ENCODE measurements at regions of chr11 and their contacts with region 1.

Region 1: GRCh38 chr11:40306938-40307548 is 1152.4 kb downstream of the LRRC4C start:
- DNase-seq: no peak
- H3K4me3 Mint-ChIP-seq: no peak overlapping the region
- H3K27ac Mint-ChIP-seq: no peak overlapping the region
- H3K4me1 Mint-ChIP-seq: no peaks in the 10 kb centered on the region
- H3K27me3 Mint-ChIP-seq: no peaks in the 10 kb centered on the region

Region 2: DNA sequence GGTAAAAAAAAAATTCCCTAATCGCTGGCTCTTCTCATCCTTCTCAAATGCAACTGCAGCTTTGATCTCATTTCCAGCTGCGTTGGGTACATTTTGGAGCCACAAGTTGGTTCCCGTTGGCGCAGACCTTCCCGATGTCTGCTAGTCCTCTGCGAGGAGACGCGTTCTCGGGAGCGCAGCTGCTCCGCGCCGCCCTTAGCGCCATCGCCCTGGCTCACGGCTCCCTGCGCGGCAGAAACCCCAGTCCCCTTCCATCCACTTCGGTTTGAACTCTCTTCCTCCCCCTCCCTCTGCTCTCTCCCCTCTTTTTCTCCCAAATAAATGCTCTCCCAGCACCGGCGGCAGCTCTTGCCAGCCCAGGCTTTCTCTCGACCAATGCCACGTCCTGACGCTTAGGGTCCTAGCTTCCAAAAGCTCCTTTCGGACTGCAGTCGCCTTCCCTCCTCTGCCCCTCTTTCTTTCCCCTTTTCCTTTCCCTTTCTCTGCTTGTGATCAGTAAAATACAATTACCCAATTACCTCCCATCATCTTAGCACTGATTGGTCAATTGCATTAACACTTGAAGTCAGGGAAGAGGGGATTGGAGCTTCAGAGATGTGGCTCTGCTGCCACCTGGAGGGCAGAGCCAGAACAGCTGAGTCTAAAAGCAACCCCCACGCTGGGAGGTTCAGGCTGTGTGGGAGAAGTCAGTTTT is 13.2 kb before region 1 on chr11:
- CTCF ChIA-PET with region 1: interaction called, 11 read pairs
- DNase-seq: peak; percentile 51
- H3K4me3 Mint-ChIP-seq: peak overlapping the region; percentile 58
- H3K27ac Mint-ChIP-seq: peak overlapping the region; percentile 47
- H3K4me1 Mint-ChIP-seq: peaks cover 6% of the 10 kb centered on the region
- H3K27me3 Mint-ChIP-seq: peaks cover 16% of the 10 kb centered on the region

Region 3: GRCh38 chr11:40323241-40323640 is 16.2 kb after region 1 on chr11:
- CTCF ChIA-PET with region 1: no interaction called
- DNase-seq: no peak
- H3K4me3 Mint-ChIP-seq: no peak overlapping the region
- H3K27ac Mint-ChIP-seq: no peak overlapping the region
- H3K4me1 Mint-ChIP-seq: no peaks in the 10 kb centered on the region
- H3K27me3 Mint-ChIP-seq: no peaks in the 10 kb centered on the region

Measured in activated naive CD4-positive, alpha-beta T cell treated with anti-CD3 and anti-CD28 coated beads, Interleukin-2, amount 10 ng/mL, durations not matched to agents 7 days and 5 days (primary cell).